ENCODE measurements at regions of chr17 and their contacts with region 1.

Region 1: GRCh38 chr17:29195465-29196081 is 15.4 kb upstream of the MYO18A start:
- DNase-seq: no peak
- H3K4me3 ChIP-seq: no peak overlapping the region
- H3K4me3 Mint-ChIP-seq: no peak overlapping the region
- H3K27ac ChIP-seq: no peak overlapping the region
- H3K27ac Mint-ChIP-seq: no peak overlapping the region
- H3K4me1 ChIP-seq: no peaks in the 10 kb centered on the region
- H3K4me1 Mint-ChIP-seq: no peaks in the 10 kb centered on the region
- H3K27me3 ChIP-seq: no peaks in the 10 kb centered on the region
- H3K27me3 Mint-ChIP-seq: peaks cover 6 to 39% of the 10 kb centered on the region in 2 donors

Region 2: DNA sequence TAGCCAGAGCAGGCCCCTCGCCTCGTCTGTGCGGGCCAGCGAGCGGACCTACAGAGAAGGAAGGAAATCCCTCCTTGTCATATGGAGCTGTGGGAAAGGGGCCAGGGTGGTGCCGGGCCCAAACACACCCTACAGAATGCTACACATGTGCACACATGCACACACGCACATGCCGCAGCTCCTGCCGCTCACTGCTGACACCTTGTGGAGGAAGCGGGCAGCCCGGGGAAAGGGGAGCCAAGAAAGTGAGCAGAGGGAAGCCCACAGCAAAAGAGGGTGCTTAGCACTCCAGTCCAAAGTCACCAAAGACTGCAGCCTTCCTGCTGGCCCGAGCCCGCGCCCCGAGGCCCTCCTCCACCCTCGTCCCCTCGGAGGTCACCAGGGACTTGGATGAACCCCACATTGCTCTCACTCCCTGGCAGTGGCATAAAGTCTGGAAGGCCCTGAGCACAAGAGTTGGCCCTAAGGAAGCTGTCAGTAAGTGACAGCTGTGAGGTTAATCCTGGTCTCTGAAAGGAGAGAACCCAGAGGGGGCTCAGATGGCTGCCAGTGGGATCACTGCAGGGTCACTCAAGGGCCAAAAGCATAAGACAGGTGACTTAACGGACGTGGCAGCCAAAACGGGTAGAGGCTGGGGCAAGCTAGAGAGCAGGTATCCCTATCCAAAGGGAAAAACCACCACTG is 83.6 kb before region 1 on chr17:
- CTCF ChIA-PET with region 1: no interaction called
- POLR2A ChIA-PET with region 1: no interaction called
- DNase-seq: peak; percentile 33 to 71 (median 48)
- H3K4me3 ChIP-seq: no peak overlapping the region
- H3K4me3 Mint-ChIP-seq: no peak overlapping the region
- H3K27ac ChIP-seq: no peak overlapping the region
- H3K27ac Mint-ChIP-seq: peak overlapping the region in 1 of 8 donors; percentile 44
- H3K4me1 ChIP-seq: no peaks in the 10 kb centered on the region
- H3K4me1 Mint-ChIP-seq: peaks cover 2 to 5% (median 3%) of the 10 kb centered on the region in 3 donors
- H3K27me3 ChIP-seq: no peaks in the 10 kb centered on the region
- H3K27me3 Mint-ChIP-seq: no peaks in the 10 kb centered on the region

Region 3: DNA sequence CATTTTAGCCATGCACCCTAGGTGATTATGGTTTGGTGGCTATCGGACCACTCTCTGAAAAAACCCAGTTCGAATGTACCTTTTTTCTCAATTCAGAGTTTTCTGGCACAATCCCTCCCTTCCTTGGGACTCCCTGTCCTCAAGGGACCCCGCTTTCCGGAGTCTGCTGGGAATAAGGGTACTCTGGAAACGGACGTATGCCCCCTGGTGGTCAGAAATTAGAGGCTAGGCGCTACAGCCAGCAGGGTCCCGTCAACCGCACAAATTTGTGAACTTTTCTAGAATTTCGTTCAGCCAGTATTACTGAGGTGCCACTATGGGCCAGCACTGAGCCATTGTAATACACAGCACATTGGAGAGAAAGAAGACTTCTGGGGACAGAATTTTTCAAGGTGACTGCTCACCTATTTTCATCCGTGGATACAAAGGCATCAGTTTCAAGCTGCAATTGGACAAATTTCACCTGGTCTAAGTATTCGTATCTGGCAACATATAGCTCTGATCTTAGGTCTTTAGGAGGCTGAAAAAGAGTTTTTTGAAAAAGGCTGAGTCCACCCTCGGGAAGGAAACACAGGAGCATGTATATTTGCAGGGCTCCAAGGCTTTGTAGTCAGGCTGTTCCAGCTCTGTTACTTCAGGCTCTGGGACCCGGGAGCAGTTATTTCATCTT is 23.9 kb after region 1 on chr17:
- CTCF ChIA-PET with region 1: interaction called, 18 read pairs
- POLR2A ChIA-PET with region 1: no interaction called
- DNase-seq: peak; percentile 57 to 79 (median 63)
- H3K4me3 ChIP-seq: no peak overlapping the region
- H3K4me3 Mint-ChIP-seq: peak overlapping the region in 1 of 7 donors; percentile 13
- H3K27ac ChIP-seq: no peak overlapping the region
- H3K27ac Mint-ChIP-seq: peak overlapping the region in 3 of 8 donors; percentile 17 to 54 (median 26)
- H3K4me1 ChIP-seq: peaks cover 4% of the 10 kb centered on the region
- H3K4me1 Mint-ChIP-seq: peaks cover 8 to 10% (median 9%) of the 10 kb centered on the region in 3 donors
- H3K27me3 ChIP-seq: no peaks in the 10 kb centered on the region
- H3K27me3 Mint-ChIP-seq: peaks cover 0 to 7% of the 10 kb centered on the region in 2 donors

Region 4: DNA sequence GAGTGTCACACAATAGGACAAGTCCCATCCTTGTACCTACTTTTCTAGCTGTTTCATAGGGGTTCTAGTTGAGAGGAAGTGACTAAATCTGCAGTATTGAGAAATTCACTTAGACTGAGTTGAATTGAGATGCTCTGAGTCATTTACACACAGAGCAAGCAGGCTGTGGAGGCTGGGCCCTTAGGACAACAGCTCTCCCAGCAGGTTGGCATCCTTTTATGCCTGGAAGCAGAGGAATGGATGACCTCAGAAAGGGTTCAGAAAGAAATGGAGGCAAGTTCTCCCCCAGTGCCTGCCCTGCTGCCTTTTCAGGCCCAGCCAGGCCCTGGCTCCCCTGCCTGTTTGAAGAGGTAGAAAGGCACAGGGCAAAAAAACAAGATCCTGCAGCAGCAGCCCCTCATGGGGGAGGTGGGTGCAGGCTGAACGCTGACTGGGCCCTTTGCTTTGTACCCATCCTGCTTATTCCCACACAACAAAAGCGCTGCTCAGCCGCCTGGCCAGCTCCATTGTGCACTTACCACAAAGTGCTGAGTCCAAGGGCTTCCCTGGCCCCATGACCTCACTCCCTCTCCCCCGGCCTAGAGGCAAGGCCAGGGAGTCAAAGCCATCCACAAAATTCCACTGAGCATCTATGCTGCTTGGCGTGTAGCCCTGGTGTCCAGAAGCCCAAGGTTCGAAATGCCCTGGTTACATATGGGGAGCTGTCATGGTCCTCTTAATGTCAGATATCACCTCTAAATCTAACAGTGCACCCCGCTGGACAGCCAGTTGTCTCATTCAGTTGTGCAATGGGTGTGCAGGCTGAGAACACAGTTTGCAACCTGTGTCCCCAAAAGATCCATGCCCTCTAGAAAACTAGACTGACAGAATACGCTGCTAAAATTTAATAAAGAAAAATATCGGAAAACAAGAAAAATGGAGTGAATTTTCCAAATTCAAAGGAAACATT is 45.7 kb after region 1 on chr17:
- CTCF ChIA-PET with region 1: no interaction called
- POLR2A ChIA-PET with region 1: no interaction called
- DNase-seq: no peak
- H3K4me3 ChIP-seq: no peak overlapping the region
- H3K4me3 Mint-ChIP-seq: no peak overlapping the region
- H3K27ac ChIP-seq: no peak overlapping the region
- H3K27ac Mint-ChIP-seq: no peak overlapping the region
- H3K4me1 ChIP-seq: no peaks in the 10 kb centered on the region
- H3K4me1 Mint-ChIP-seq: no peaks in the 10 kb centered on the region
- H3K27me3 ChIP-seq: no peaks in the 10 kb centered on the region
- H3K27me3 Mint-ChIP-seq: no peaks in the 10 kb centered on the region

Measured in CD8-positive, alpha-beta memory T cell (primary cell).